ENCODE measurements at regions of chr11 and their contacts with region 1.

Region 1: DNA sequence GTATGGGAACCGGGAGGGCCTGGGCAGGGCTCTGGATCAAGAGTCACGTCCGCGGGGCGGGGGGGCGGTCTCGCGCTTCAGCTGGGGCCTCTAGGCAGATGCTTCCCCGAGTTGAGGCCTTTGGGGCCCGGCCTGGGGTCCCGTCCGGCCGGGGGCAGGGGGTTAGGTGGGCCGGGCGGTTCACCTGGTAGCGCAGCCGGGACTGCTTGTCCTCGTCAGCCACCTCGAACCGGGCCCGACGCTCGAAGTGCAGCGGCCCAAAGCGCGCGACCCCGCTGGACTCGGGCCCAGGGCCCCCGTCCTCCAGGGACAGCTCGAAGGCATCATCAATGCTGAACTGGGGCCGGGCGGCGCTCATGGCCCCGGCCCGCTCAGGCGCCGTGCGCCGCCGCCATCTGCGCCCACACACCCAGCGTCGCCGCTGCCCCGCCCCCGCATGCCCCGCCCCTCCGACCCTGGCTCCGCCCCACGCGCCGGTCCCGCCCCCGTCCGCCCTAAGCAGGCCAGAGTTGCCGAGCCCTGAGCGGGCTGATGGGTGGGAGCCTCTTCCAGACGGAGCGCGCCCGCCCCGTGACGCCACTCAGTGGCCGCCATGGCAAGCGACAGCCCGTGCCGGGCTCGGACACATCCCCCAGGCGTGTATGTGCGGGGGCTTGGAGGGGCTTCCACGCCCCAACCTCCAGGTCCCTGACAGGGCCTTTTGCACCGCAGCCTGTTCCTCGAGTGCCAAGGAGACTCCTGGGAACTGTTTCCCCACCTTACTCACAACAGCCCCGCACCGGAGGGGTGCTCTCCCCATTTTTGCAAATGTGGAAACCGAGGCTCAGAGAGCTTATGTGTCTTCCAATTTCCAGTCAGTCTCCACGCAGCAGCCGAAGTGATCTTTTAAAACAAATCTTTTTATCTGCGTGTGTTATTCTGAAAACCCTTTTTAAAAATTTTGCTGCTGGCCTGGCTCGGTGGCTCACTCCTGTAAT is at the start of gene TMEM134:
- H3K4me3 Mint-ChIP-seq: peak within 1 kb of the TSS; percentile 87
- H3K27ac Mint-ChIP-seq: peak within 1 kb of the TSS; percentile 82
- H3K4me1 Mint-ChIP-seq: peaks cover 63% of the 10 kb centered on the region
- H3K27me3 Mint-ChIP-seq: peaks cover 10% of the 10 kb centered on the region

Region 2: DNA sequence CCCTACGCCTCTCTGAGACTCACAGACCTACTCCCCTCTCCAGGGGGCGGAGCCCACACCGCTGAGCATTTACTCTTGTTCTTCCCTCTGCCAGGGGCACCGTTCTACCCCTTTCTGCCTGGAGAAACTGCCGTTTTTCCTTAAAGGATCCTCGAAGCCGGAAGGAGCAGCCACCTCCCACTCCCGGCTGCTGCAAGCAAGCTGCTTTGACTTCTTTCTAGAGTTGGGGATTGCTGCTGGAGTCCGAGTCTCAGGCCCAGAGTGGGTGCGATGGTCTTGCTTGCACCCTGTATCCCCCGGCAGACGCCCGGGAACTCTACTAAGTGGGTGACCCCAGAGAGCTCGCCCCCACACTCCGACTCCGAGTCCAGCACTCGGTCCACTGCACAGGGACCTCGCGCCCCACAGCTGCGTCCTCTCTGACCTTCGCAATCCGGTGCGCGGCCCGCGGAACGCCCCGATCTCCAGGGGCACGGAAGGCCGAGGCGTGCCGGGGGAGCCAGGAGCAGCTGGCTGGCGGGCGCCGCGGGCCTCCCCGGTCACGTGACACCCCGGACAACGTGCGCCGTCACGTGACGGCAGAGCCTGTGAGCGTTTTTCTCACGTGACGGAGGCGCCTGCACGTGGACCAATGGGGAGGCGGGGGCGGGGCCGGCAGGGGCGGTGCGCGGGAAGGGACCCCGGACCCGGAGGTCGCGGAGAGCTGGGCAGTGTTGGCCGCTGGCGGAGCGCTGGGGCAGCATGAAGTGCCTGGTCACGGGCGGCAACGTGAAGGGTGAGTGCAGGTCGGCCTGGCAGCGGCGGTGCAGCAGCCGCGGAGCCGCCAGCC is 77.6 kb before region 1 on chr11 and contains the start of gene RAD9A:
- intact Hi-C with region 1: loop called (anchors 2 kb)
- H3K4me3 Mint-ChIP-seq: peak within 1 kb of the TSS; percentile 93
- H3K27ac Mint-ChIP-seq: peak within 1 kb of the TSS; percentile 95
- H3K4me1 Mint-ChIP-seq: peaks cover 60% of the 10 kb centered on the region
- H3K27me3 Mint-ChIP-seq: no peaks in the 10 kb centered on the region

Region 3: GRCh38 chr11:67401495-67402191 is 67.5 kb before region 1 on chr11 and contains the start of gene PPP1CA:
- intact Hi-C with region 1: loop called (anchors 2 kb)
- H3K4me3 Mint-ChIP-seq: peak within 1 kb of the TSS; percentile 80
- H3K27ac Mint-ChIP-seq: peak within 1 kb of the TSS; percentile 82
- H3K4me1 Mint-ChIP-seq: peaks cover 87% of the 10 kb centered on the region
- H3K27me3 Mint-ChIP-seq: no peaks in the 10 kb centered on the region

Region 4: DNA sequence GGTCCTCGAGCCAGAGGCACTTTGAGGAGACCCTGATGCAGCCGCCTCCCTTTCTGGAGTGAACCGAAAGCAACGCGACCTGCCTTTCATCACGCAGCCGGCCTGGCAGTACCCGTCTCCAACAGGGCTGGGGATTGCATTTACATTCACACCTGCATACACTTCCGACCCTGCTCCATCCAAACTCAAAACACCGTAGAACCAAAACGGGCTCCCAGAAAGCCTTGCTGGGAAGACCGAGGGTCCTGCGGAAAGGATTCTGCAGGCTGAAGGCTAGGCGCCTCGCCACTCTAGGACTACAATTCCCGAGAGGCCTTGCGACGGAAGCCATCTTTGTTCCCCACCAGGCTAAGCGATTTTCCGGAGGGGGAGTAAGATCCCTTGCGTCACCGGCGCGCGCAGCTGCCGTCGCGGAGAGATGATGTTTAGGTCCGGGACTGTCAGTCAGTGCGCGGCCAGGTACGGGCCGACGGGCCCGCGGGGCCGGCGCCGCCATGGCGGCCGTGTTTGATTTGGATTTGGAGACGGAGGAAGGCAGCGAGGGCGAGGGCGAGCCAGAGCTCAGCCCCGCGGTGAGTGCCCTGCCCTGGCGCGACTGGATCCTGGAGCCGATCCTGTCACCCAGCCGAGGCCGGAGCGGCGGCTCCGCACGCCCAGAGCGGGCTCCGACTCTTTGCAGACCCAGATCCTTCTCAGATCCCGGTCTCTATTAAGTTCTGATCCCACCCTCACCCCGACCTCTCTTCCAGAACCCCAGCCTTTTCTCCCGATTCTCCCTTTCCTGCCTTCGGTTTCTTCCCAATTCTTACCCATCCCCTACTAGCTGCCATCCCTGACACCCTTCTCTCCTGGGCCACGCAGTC is 40.8 kb before region 1 on chr11 and contains the start of gene RPS6KB2:
- intact Hi-C with region 1: loop called (anchors 5 kb)
- H3K4me3 Mint-ChIP-seq: peak within 1 kb of the TSS; percentile 97
- H3K27ac Mint-ChIP-seq: peak within 1 kb of the TSS; percentile 88
- H3K4me1 Mint-ChIP-seq: peaks cover 27% of the 10 kb centered on the region
- H3K27me3 Mint-ChIP-seq: no peaks in the 10 kb centered on the region

Region 5: GRCh38 chr11:67439321-67439883 is 29.7 kb before region 1 on chr11:
- intact Hi-C with region 1: loop called (anchors 2 kb)
- H3K4me3 Mint-ChIP-seq: no peak overlapping the region
- H3K27ac Mint-ChIP-seq: peak overlapping the region; percentile 60
- H3K4me1 Mint-ChIP-seq: peaks cover 72% of the 10 kb centered on the region
- H3K27me3 Mint-ChIP-seq: no peaks in the 10 kb centered on the region

Region 6: GRCh38 chr11:67482825-67483798 is 14.0 kb after region 1 on chr11 and contains the start of gene AIP:
- intact Hi-C with region 1: loop called (anchors 2 kb)
- H3K4me3 Mint-ChIP-seq: peak within 1 kb of the TSS; percentile 91
- H3K27ac Mint-ChIP-seq: peak within 1 kb of the TSS; percentile 96
- H3K4me1 Mint-ChIP-seq: peaks cover 47% of the 10 kb centered on the region
- H3K27me3 Mint-ChIP-seq: peaks cover 3% of the 10 kb centered on the region

Region 7: DNA sequence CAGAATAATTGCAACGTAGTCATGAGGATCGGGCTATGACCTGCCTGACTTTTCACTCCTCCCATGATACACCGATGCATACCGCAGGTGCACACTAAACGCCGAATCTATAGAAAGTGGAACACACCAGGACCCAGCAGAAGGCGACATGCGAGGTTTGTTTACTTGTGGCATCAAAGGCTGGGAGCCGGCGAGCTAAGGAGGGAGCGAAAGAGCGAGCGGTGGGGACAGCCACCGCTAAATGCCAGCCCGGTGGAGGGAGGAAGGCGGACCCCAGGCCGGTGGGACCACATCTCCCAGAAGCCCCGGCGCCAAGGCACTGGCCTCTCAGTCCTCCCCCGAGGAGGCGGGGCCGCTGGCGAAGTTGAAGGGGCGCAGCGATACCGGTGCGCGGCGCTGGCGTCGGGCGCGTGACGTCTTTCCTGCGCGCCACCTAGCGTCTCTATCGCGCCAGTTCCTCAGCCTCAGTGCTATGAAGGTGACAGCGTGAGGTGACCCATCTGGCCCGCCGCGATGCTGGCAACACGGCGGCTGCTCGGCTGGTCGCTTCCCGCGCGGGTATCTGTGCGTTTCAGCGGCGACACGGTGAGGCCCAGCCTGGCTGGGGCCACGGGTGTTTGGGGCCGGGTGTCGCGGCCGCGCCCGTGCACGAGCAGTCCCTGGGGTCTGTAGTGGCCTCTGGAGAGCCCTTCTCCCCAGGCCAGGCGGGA is 137.5 kb after region 1 on chr11 and contains the start of gene NDUFV1:
- intact Hi-C with region 1: no loop called
- H3K4me3 Mint-ChIP-seq: peak within 1 kb of the TSS; percentile 94
- H3K27ac Mint-ChIP-seq: peak within 1 kb of the TSS; percentile 87
- H3K4me1 Mint-ChIP-seq: peaks cover 30% of the 10 kb centered on the region
- H3K27me3 Mint-ChIP-seq: peaks cover 21% of the 10 kb centered on the region

Region 8: GRCh38 chr11:68223275-68223674 is 754.2 kb after region 1 on chr11:
- intact Hi-C with region 1: no loop called
- H3K4me3 Mint-ChIP-seq: no peak overlapping the region
- H3K27ac Mint-ChIP-seq: no peak overlapping the region
- H3K4me1 Mint-ChIP-seq: peaks cover 6% of the 10 kb centered on the region
- H3K27me3 Mint-ChIP-seq: peaks cover 5% of the 10 kb centered on the region

Measured in dendritic cell treated with granulocyte-macrophage colony-stimulating factor and Interleukin-4, amounts not matched to agents 40 ng/mL and 50 ng/mL, for 4 days (primary cell).